Sigmoid colon (tissue), 7 donors: ENCODE measurements at regions of chr5 and their contacts with region 1.

Region 1: DNA sequence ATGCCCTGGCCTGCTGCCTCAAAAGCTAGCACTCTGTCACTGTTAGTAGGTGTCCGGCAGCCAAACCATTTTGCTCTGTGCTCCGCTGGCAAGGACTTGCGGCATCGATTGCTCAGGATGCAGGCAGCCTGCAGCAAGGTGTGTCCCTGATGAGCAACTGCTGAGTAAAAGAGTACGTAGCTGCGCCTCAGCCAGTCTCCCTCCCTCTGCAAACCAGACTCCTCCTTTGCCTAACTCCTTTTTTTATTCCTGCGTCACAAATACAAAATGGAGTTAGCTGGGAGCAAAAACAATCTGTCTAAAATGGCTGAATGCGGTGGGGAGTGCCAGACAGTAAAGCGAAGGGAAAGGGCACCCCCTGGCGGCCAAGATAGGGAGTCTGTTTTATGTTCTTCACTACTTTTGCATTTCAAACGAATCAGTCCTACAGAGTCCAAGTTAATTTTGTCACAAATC is 61.1 kb downstream of the DIAPH1 start:
- DNase-seq: peak; percentile 95
- H3K4me3 ChIP-seq: peak overlapping the region in 3 of 4 donors; percentile 16 to 26 (median 20)
- H3K27ac ChIP-seq: peak overlapping the region; percentile 74 to 89 (median 86)
- H3K4me1 ChIP-seq: peaks cover 0 to 32% (median 27%) of the 10 kb centered on the region in 4 donors
- H3K27me3 ChIP-seq: no peaks in the 10 kb centered on the region
- CTCF ChIP-seq: peak; percentile 70 to 88 (median 76)
- EP300 ChIP-seq: no peak
- POLR2A ChIP-seq: no peak

Region 2: DNA sequence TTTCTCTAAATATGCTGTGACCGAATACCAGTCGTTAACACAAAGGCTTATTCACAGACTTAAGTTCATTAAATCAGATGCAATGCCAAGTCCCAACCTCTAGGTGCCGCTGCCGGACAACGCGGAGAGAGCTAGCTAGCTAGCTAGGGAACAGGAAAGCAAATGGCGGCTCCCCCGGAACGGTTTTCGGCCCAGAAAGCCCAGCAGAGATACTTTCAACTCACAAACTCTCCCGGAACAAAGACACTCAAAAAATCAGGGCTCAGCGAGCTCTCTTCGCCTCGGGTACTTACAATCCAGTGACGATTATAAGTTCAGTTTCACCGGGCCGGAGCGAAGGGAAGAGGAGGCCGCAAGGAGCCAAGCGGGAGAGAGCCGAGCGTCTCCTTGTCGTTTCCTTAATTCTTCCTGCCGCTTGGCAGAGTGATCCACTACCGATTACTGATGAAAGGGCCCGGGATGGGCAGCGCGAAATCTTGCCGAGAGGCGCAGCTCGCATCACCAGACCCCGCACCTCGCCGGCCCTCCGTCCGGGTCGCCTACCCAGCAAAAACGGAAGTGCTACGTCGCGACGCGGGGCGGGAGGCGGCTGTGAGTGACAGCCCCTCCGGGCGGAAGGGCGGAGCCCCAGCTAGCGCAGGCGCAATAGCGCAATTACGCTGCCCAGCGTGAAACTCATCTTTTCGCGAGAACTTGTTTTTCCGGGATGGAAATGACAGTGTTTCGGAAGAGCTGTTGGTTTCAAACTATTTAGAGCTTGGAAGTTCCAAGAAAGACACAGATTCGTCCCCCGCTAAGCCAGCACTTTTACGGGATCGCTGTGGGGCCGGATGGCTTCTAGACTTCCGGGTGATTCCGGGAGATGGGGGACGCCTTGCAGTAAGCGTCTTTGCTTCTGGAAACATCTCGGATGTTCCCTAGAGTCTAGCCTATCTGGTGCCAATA is 237.2 kb before region 1 on chr5 and contains the start of gene TAF7:
- intact Hi-C with region 1: loop called (anchors 1 kb)
- DNase-seq: peak; percentile 93
- H3K4me3 ChIP-seq: peak within 1 kb of the TSS; percentile 65 to 75 (median 66)
- H3K27ac ChIP-seq: peak within 1 kb of the TSS; percentile 88 to 94 (median 90)
- H3K4me1 ChIP-seq: peaks cover 0 to 11% (median 0%) of the 10 kb centered on the region in 4 donors
- H3K27me3 ChIP-seq: no peaks in the 10 kb centered on the region
- CTCF ChIP-seq: peak; percentile 26 to 73 (median 58)
- EP300 ChIP-seq: no peak
- POLR2A ChIP-seq: peak; percentile 81 to 86
- total RNA-seq, gene TAF7: 44.9 to 62.2 (median 48.1) TPM

Region 3: GRCh38 chr5:141419074-141419880 is 138.4 kb before region 1 on chr5:
- intact Hi-C with region 1: loop called (anchors 5 kb)
- DNase-seq: no peak
- H3K4me3 ChIP-seq: no peak overlapping the region
- H3K27ac ChIP-seq: no peak overlapping the region
- H3K4me1 ChIP-seq: peaks cover 0 to 4% (median 2%) of the 10 kb centered on the region in 4 donors
- H3K27me3 ChIP-seq: no peaks in the 10 kb centered on the region
- CTCF ChIP-seq: no peak
- EP300 ChIP-seq: no peak
- POLR2A ChIP-seq: no peak